B cell (primary cell): ENCODE measurements at regions of chr6 and their contacts with region 1.

Region 1: DNA sequence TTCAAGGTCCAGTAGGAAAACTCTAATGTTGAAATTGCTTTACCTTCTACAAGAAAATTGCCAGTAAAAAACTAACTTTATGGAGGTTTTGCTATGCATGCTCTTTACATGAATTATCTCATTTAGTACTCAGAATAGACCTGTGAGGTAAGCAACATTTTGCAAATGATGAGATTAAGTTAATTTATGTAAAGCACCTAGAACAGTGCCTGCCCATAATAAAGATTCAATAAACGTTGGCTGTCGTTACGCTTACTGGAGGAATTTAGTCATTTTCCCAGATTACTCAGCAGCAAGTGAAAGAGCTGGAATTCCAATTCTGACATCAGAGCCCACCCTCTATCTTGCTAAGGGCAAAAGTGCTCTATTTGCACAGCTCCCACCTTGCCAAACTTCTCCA is 69.4 kb upstream of the ARID1B start:
- DNase-seq: no peak
- ATAC-seq: no peak
- H3K4me3 ChIP-seq: no peak overlapping the region
- H3K4me3 Mint-ChIP-seq: no peak overlapping the region
- H3K27ac ChIP-seq: no peak overlapping the region
- H3K27ac Mint-ChIP-seq: no peak overlapping the region
- H3K4me1 ChIP-seq: peaks cover 6 to 13% of the 10 kb centered on the region in 2 donors
- H3K4me1 Mint-ChIP-seq: peaks cover 18% of the 10 kb centered on the region
- H3K27me3 ChIP-seq: no peaks in the 10 kb centered on the region
- H3K27me3 Mint-ChIP-seq: no peaks in the 10 kb centered on the region
- CTCF ChIP-seq: no peak

Region 2: DNA sequence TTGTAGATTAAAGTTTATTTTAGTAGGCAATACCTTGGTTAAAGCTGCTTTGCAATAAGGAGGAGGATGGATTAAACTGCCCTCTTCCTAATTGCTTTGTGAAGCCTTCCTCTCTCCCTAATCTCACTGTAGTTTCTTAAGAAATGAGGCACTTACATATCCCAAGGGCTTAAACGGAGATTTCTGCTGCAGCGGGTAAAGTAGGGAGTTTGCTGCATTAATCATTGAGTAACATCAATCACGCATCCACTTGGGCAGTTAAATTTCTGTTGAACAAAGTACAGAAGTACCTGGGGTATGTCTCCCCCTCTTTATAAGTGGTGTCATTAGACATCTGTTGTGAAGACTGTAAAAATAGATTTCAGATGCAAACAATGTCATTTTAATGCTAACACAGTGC is 39.9 kb after region 1 on chr6:
- CTCF ChIA-PET with region 1: no interaction called
- POLR2A ChIA-PET with region 1: no interaction called
- intact Hi-C with region 1: loop called (anchors 1 kb)
- DNase-seq: no peak
- ATAC-seq: no peak
- H3K4me3 ChIP-seq: no peak overlapping the region
- H3K4me3 Mint-ChIP-seq: no peak overlapping the region
- H3K27ac ChIP-seq: no peak overlapping the region
- H3K27ac Mint-ChIP-seq: no peak overlapping the region
- H3K4me1 ChIP-seq: peaks cover 8 to 9% of the 10 kb centered on the region in 2 donors
- H3K4me1 Mint-ChIP-seq: peaks cover 10% of the 10 kb centered on the region
- H3K27me3 ChIP-seq: no peaks in the 10 kb centered on the region
- H3K27me3 Mint-ChIP-seq: no peaks in the 10 kb centered on the region
- CTCF ChIP-seq: no peak